Aorta (tissue), 5 donors: ENCODE measurements at regions of chr11 and their contacts with region 1.

Region 1: GRCh38 chr11:81915045-81915444 is 818.6 kb downstream of the FAM181B start:
- DNase-seq: peak in 1 of 2 donors; percentile 46
- ATAC-seq: no peak
- H3K4me3 ChIP-seq: no peak overlapping the region
- H3K27ac ChIP-seq: no peak overlapping the region
- H3K4me1 ChIP-seq: no peaks in the 10 kb centered on the region
- H3K27me3 ChIP-seq: no peaks in the 10 kb centered on the region

Region 2: DNA sequence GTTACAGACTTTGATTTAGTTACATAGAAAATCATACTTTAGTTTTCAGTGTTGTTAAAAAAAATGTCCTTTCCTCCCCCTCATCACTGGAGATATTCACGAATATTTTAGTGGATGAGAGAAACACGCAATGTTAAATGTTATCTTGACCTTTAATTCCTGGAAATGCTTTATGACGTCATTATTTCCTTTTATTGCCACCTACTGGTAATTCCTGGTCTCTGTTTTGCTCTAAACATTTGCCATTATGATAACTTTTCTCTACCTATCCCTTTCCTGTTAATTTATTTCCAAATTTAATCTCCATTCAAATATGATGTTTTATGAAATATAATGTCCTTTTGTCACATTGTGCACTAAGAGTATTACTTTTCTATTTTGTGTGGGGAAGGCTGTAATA is 48.0 kb after region 1 on chr11:
- intact Hi-C with region 1: loop called in 1 of 2 experiments (anchors 10 kb)
- DNase-seq: no peak
- ATAC-seq: no peak
- H3K4me3 ChIP-seq: no peak overlapping the region
- H3K27ac ChIP-seq: peak overlapping the region in 1 of 2 donors; percentile 14
- H3K4me1 ChIP-seq: no peaks in the 10 kb centered on the region
- H3K27me3 ChIP-seq: no peaks in the 10 kb centered on the region

Region 3: GRCh38 chr11:82059505-82059904 is 144.5 kb after region 1 on chr11:
- intact Hi-C with region 1: loop called in 1 of 2 experiments (anchors 10 kb)
- DNase-seq: no peak
- ATAC-seq: no peak
- H3K4me3 ChIP-seq: no peak overlapping the region
- H3K27ac ChIP-seq: no peak overlapping the region
- H3K4me1 ChIP-seq: no peaks in the 10 kb centered on the region
- H3K27me3 ChIP-seq: no peaks in the 10 kb centered on the region